ENCODE measurements at regions of chr20 and their contacts with region 1.

Region 1: GRCh38 chr20:32779500-32780211 is 17.5 kb downstream of the DNMT3B start:
- DNase-seq: no peak
- ATAC-seq: no peak
- H3K4me3 Mint-ChIP-seq: no peak overlapping the region
- H3K27ac Mint-ChIP-seq: no peak overlapping the region
- H3K4me1 Mint-ChIP-seq: peaks cover 31% of the 10 kb centered on the region
- H3K27me3 Mint-ChIP-seq: no peaks in the 10 kb centered on the region

Region 2: GRCh38 chr20:32585011-32585518 is 194.6 kb before region 1 on chr20 and contains the start of gene NOL4L:
- CTCF ChIA-PET with region 1: interaction called, 12 read pairs
- POLR2A ChIA-PET with region 1: no interaction called
- DNase-seq: peak; percentile 53
- ATAC-seq: peak; percentile 45
- H3K4me3 Mint-ChIP-seq: peak within 1 kb of the TSS; percentile 81
- H3K27ac Mint-ChIP-seq: peak within 1 kb of the TSS; percentile 74
- H3K4me1 Mint-ChIP-seq: peaks cover 46% of the 10 kb centered on the region
- H3K27me3 Mint-ChIP-seq: peaks cover 22% of the 10 kb centered on the region
- total RNA-seq, gene NOL4L: 22.2 to 24.5 TPM

Region 3: DNA sequence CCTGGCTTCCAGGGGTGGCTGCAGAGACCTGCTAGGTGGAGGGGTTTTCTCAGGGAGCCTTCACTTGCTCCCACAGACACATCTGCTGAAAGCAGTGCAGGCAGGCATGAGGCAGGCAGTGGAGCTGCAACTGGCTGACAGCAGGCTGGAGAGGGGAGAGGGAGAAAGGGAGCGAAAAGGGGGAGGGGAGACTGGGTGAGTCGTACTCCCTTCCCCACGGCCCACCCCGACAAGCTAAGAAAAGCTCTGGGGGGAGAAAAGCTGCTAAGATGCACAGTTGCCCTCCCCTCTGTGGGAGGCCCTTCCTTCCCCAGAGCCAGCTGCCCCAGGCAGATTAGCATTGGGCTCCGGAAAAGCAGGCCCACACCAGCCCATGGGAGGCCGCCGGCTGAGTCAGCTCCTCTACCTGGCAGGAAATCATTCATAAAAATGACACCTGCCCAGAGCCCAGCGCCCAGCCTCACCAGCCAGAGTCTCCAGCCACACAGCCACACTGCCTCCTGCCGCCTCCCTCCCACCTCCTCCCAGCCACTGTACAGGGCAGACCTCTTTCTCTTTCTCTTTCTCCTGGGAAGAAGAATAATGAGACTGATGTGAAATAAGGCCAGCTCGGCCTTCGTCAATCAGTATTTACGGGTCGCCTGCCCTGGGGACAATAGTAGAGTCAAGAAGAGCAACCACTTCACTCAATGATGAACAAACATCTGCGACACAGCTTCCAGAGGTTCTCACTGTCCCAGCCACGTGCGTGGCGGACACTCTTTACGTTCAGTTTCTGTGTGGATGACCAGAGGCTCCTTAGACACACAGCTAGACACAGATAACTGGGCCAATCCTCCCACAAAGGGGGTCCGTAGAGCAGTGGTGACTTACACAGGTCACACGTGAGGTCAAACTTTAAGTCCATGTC is 98.2 kb before region 1 on chr20:
- CTCF ChIA-PET with region 1: interaction called, 370 read pairs
- POLR2A ChIA-PET with region 1: no interaction called
- DNase-seq: peak; percentile 46
- ATAC-seq: peak; percentile 75
- H3K4me3 Mint-ChIP-seq: peak overlapping the region; percentile 10
- H3K27ac Mint-ChIP-seq: peak overlapping the region; percentile 72
- H3K4me1 Mint-ChIP-seq: peaks cover 31% of the 10 kb centered on the region
- H3K27me3 Mint-ChIP-seq: no peaks in the 10 kb centered on the region

Region 4: DNA sequence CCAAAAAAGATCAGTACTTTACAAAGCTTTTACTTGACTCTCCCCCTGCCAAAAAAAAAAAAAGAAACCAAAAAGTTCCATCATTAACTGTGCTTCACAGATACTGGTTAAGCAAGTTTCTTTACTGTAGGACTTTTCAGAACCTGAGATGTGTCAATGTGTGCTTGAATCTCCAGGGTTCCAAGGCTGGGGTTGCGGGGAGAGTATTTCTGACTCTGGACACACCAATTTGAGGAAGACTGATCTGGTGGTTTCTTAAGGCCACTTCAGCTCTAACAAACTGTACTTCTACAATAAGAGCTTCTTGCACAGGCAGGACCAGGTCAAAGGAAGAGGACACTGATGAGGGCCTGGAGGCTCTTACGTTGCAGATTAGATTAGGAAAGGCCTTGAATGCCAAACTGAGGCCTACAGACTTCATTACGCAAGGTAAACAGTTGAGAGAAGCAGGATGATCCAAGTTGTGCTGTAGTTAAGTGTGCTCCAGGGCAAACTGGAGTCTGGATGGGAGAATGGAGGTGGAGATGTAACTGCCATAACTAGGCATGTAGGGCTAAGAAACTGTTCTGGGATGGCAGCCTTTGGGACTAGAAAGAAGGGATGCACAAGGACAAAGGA is 60.8 kb before region 1 on chr20:
- CTCF ChIA-PET with region 1: no interaction called
- POLR2A ChIA-PET with region 1: no interaction called
- DNase-seq: no peak
- ATAC-seq: no peak
- H3K4me3 Mint-ChIP-seq: no peak overlapping the region
- H3K27ac Mint-ChIP-seq: peak overlapping the region; percentile 4
- H3K4me1 Mint-ChIP-seq: no peaks in the 10 kb centered on the region
- H3K27me3 Mint-ChIP-seq: no peaks in the 10 kb centered on the region

Region 5: GRCh38 chr20:32737371-32738223 is 42.1 kb before region 1 on chr20:
- CTCF ChIA-PET with region 1: interaction called, 60 read pairs
- POLR2A ChIA-PET with region 1: interaction called, 3 read pairs
- DNase-seq: peak; percentile 71
- ATAC-seq: peak; percentile 81
- H3K4me3 Mint-ChIP-seq: peak overlapping the region; percentile 48
- H3K27ac Mint-ChIP-seq: peak overlapping the region; percentile 90
- H3K4me1 Mint-ChIP-seq: peaks cover 52% of the 10 kb centered on the region
- H3K27me3 Mint-ChIP-seq: no peaks in the 10 kb centered on the region

Region 6: GRCh38 chr20:32762149-32762753 is 17.4 kb before region 1 on chr20 and contains the start of gene DNMT3B:
- CTCF ChIA-PET with region 1: interaction called, 61 read pairs
- POLR2A ChIA-PET with region 1: interaction called, 5 read pairs
- DNase-seq: peak; percentile 84
- ATAC-seq: peak; percentile 80
- H3K4me3 Mint-ChIP-seq: peak within 1 kb of the TSS; percentile 85
- H3K27ac Mint-ChIP-seq: peak within 1 kb of the TSS; percentile 67
- H3K4me1 Mint-ChIP-seq: peaks cover 29% of the 10 kb centered on the region
- H3K27me3 Mint-ChIP-seq: peaks cover 2% of the 10 kb centered on the region
- total RNA-seq, gene DNMT3B: 9.0 to 10.0 TPM

Region 7: DNA sequence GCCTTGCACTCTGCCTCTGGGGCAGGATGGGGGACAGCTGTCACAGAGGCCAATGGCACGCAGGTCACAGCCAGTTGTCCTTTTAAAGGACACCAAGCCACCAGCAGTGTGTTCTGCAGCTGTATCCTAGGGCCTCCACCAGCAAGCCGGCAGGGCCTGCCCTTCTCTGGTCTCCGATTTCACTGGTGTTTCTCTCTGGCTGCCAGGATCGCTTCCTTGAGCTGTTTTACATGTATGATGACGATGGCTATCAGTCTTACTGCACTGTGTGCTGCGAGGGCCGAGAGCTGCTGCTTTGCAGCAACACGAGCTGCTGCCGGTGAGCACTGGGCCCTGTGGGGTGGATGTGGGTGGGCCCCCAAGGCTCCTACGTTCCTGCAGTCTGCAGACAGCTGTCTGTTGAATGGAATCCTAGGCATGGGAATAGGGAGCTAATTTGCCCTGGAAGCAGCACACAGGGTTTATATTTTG is 17.4 kb after region 1 on chr20:
- CTCF ChIA-PET with region 1: interaction called, 22 read pairs
- POLR2A ChIA-PET with region 1: no interaction called
- DNase-seq: no peak
- ATAC-seq: no peak
- H3K4me3 Mint-ChIP-seq: no peak overlapping the region
- H3K27ac Mint-ChIP-seq: no peak overlapping the region
- H3K4me1 Mint-ChIP-seq: peaks cover 30% of the 10 kb centered on the region
- H3K27me3 Mint-ChIP-seq: no peaks in the 10 kb centered on the region

Region 8: GRCh38 chr20:32871627-32872160 is 92.0 kb after region 1 on chr20:
- CTCF ChIA-PET with region 1: no interaction called
- POLR2A ChIA-PET with region 1: no interaction called
- DNase-seq: no peak
- ATAC-seq: no peak
- H3K4me3 Mint-ChIP-seq: no peak overlapping the region
- H3K27ac Mint-ChIP-seq: no peak overlapping the region
- H3K4me1 Mint-ChIP-seq: no peaks in the 10 kb centered on the region
- H3K27me3 Mint-ChIP-seq: no peaks in the 10 kb centered on the region

Measured in activated CD8-positive, alpha-beta T cell treated with anti-CD3 and anti-CD28 coated beads, Interleukin-2, amount 10 ng/mL, durations not matched to agents 7 days and 5 days (primary cell).